ENCODE measurements at regions of chr1 and their contacts with region 1.

Region 1: GRCh38 chr1:11735854-11736745 is at the start of gene AGTRAP:
- DNase-seq: peak; percentile 86
- H3K4me3 ChIP-seq: peak within 1 kb of the TSS; percentile 81 to 99 (median 94)
- H3K27ac ChIP-seq: peak within 1 kb of the TSS; percentile 96
- H3K4me1 ChIP-seq: peaks cover 46% of the 10 kb centered on the region
- H3K27me3 ChIP-seq: no peaks in the 10 kb centered on the region
- CTCF ChIP-seq: peak in 1 of 2 donors; percentile 14
- total RNA-seq, gene AGTRAP: 105 to 109 TPM

Region 2: DNA sequence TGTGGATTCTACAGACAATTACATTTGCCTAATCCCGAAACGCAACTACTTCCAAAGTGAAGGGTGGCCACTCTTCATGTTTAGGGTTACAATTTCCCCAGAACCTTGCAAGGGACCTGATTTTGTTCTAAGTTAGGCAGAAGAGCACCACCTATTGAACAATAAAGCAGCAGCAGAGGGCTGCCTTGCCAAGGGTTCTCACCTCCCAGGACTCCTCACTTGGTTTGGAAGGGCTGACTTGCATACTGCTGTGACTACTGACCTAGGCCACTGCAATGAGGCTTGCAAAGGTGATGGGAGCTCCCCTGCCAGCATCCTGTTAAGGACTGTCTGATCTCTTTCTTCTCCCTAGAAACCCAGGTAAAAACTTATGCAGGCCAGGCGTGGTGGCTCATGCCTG is 487.9 kb before region 1 on chr1:
- CTCF ChIA-PET with region 1: no interaction called
- dilution Hi-C with region 1: no loop called
- in situ Hi-C with region 1: loop called in 1 of 2 experiments (anchors 10 kb)
- intact Hi-C with region 1: no loop called
- DNase-seq: no peak
- H3K4me3 ChIP-seq: no peak overlapping the region
- H3K27ac ChIP-seq: no peak overlapping the region
- H3K4me1 ChIP-seq: no peaks in the 10 kb centered on the region
- H3K27me3 ChIP-seq: no peaks in the 10 kb centered on the region
- CTCF ChIP-seq: peak in 1 of 2 donors; percentile 16

Region 3: GRCh38 chr1:11805447-11806306 is 69.6 kb after region 1 on chr1 and contains the starts of genes CLCN6 and MTHFR:
- CTCF ChIA-PET with region 1: no interaction called
- dilution Hi-C with region 1: no loop called
- in situ Hi-C with region 1: no loop called
- intact Hi-C with region 1: loop called (anchors 2 kb)
- DNase-seq: peak; percentile 99
- H3K4me3 ChIP-seq: peak within 1 kb of the TSS; percentile 50 to 87 (median 71)
- H3K27ac ChIP-seq: peak within 1 kb of the TSS; percentile 90
- H3K4me1 ChIP-seq: peaks cover 50% of the 10 kb centered on the region
- H3K27me3 ChIP-seq: no peaks in the 10 kb centered on the region
- CTCF ChIP-seq: no peak
- total RNA-seq, gene CLCN6: 7.0 to 17.0 TPM
- total RNA-seq, gene MTHFR: 19.1 to 19.2 TPM

Region 4: DNA sequence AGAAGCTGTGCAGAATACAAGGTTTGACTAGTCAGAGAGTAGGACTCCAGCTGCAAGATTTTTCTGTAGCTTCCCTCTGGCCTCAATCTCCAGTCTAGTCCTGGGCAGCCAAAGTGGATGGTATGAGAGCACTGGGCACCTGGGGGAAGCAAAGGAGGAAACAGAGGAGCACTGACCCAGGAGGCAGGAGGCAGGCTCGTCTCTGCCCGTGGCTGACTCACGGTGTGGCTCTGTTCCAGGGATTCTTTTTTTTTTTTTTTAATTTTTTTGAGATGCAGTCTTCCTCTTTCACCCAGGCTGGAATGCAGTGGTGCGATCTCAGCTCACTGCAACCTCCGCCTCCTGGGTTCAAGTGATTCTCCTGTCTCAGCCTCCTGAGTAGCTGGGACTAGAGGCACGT is 126.8 kb after region 1 on chr1:
- CTCF ChIA-PET with region 1: no interaction called
- dilution Hi-C with region 1: loop called (anchors 10 kb)
- in situ Hi-C with region 1: no loop called
- intact Hi-C with region 1: no loop called
- DNase-seq: peak; percentile 44
- H3K4me3 ChIP-seq: no peak overlapping the region
- H3K27ac ChIP-seq: no peak overlapping the region
- H3K4me1 ChIP-seq: peaks cover 11% of the 10 kb centered on the region
- H3K27me3 ChIP-seq: peaks cover 16% of the 10 kb centered on the region
- CTCF ChIP-seq: no peak

Measured in mammary epithelial cell (primary cell).